A673 (cell line): ENCODE measurements at regions of chr5 and their contacts with region 1.

Region 1: GRCh38 chr5:89930591-89931392 is 478.8 kb downstream of the CETN3 start:
- DNase-seq: peak; percentile 72
- H3K4me3 ChIP-seq: no peak overlapping the region
- H3K27ac ChIP-seq: peak overlapping the region; percentile 46
- H3K4me1 ChIP-seq: peaks cover 22% of the 10 kb centered on the region
- H3K27me3 ChIP-seq: no peaks in the 10 kb centered on the region
- CTCF ChIP-seq: no peak

Region 2: GRCh38 chr5:90093751-90094485 is 163.1 kb after region 1 on chr5:
- CTCF ChIA-PET with region 1: no interaction called
- POLR2A ChIA-PET with region 1: no interaction called
- intact Hi-C with region 1: loop called (anchors 2 kb)
- DNase-seq: peak; percentile 92
- H3K4me3 ChIP-seq: no peak overlapping the region
- H3K27ac ChIP-seq: peak overlapping the region; percentile 72
- H3K4me1 ChIP-seq: peaks cover 52% of the 10 kb centered on the region
- H3K27me3 ChIP-seq: no peaks in the 10 kb centered on the region
- CTCF ChIP-seq: no peak

Region 3: GRCh38 chr5:90264689-90265544 is 334.1 kb after region 1 on chr5:
- CTCF ChIA-PET with region 1: no interaction called
- POLR2A ChIA-PET with region 1: no interaction called
- intact Hi-C with region 1: loop called (anchors 10 kb)
- DNase-seq: peak; percentile 78
- H3K4me3 ChIP-seq: no peak overlapping the region
- H3K27ac ChIP-seq: no peak overlapping the region
- H3K4me1 ChIP-seq: peaks cover 3% of the 10 kb centered on the region
- H3K27me3 ChIP-seq: no peaks in the 10 kb centered on the region
- CTCF ChIP-seq: peak; percentile 95